Heart right ventricle (tissue), 16 donors: ENCODE measurements at regions of chr21 and their contacts with region 1.

Region 1: DNA sequence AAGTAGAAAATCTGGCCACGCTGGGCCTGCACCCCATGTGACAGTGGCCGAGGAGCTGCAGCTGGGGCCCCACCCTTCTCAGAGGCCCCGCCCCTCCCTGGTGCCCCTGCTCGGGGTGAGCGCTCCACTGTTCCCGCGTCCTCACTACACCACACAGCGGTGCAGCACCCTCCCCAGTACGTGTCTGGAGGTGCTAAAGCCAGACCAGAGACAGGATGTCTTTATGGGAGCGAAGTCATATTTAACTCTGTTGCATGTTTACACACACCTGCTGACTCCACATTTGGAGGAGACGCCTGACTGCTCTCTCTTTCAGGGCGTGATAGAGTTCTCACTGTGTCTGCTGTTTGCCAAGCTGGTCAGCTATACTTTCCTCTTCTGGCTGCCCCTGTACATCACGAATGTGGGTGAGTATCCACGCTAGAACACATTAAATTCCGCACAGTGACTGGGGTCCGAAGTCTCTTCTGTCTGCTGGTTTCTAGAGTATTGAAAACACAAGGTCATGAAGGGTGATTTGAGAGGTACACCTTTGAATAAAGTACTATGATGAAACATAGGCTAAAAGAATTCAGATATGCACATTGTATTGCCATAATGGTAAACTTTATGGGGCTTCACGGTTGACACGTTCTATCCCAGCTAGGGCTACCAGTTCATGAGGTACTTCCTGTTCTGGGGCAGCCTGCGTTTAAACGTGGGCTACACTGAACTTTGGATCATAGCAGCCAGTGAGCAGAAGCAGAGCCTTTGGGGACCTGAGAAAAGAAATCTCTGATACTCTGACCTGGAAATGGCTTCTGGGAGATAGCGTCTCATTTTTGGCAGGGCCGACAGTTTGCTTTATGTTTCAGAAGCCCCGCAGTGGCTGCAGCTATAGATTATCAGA is 48.4 kb downstream of the SLC37A1 start:
- DNase-seq: no peak
- ATAC-seq: no peak
- H3K4me3 ChIP-seq: no peak overlapping the region
- H3K27ac ChIP-seq: no peak overlapping the region
- H3K4me1 ChIP-seq: no peaks in the 10 kb centered on the region
- H3K27me3 ChIP-seq: no peaks in the 10 kb centered on the region
- CTCF ChIP-seq: no peak

Region 2: DNA sequence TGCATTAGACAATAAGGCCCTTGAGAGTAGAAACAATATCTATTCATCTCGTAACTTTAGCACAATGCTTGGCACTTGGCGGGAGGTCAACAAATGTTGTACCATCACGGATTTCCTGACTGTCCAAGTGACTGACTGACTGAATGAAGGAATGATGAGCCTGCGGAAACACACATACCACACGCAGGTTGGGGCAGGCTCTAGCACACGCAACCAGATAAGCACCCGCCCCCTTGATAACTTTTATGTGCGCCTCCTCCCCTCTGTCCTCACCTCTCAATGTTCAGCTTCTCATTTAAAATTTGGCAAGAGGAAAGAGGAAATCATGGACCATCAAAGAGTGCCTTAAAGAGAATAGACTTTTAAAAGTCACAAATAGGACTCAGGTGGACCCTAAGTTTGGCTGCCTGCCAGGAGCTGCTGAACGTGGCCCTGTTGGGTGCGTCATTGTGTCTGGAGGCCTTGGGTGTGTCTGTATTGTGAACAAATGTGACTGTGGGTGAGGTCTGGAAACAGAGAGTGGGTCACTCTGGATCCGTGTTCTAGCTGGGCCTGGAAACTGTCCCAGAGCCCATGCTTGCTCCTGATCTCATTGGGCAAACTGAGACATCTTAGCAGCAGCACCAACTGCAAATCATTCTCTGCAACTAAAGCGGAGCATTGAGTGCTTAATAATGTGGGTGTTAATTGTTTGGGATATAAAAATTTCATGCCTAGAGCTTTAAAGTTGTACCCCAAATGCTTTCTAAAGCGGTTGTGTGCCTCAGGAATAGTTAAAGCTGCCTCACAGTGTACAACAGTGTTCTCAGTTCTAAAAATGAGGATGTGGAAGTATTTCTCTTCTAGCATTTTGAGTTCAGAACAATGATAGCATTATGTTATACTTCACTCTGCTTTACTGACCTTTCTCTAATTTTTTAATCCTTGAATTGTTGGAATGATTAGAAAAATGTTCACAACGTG is 390.6 kb before region 1 on chr21:
- intact Hi-C with region 1: loop called in 1 of 10 experiments (anchors 10 kb)
- DNase-seq: peak; percentile 47 to 68
- ATAC-seq: peak; percentile 55 to 93 (median 84)
- H3K4me3 ChIP-seq: no peak overlapping the region
- H3K27ac ChIP-seq: peak overlapping the region in 7 of 10 donors; percentile 2 to 52 (median 30)
- H3K4me1 ChIP-seq: peaks cover 0 to 19% (median 0%) of the 10 kb centered on the region in 9 donors
- H3K27me3 ChIP-seq: no peaks in the 10 kb centered on the region
- CTCF ChIP-seq: no peak

Region 3: DNA sequence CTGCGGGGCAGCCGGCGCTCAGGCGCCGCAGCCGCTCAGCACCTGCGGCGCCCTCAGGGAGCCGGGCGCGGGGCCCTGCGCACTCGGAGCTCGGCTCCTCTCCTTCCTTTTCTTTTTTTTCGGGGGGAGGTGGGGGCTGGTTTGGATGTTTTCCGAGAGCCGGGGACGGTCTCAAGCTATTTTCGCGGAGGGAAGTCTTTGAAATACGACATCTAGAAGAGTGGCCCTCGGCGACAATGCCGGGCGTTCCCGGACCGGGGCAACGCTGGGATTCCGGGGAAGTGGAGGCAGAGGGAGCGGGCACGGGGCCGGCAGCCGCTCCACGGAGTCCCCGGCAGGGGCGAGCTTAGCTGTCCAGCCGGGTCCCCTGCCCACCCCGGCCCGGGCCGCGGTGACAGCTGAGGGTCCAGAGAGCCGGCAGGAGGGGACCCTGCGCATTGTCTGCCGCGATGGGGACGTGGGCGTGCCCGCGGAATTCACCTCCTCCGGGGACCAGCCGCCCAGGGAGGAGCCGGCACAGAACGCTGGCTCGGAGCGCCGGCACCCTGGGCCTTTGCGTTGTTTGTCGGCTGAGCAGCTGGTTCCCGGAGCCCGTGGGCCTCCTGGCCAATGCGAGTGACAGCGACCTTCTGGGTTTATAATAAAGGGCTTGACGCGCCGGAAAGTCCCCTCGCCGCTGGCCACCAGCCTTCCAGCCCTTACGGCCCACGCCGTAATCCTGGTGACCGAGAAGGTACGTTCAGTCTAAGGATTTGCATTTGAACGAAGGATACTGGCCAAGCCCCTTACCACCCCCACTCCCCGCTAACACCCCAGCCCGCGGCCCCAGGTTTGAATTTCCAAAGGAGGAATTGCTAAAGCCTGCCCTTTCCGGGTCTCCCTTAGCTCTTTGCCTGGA is 47.8 kb before region 1 on chr21:
- intact Hi-C with region 1: no loop called
- DNase-seq: peak; percentile 41 to 64
- ATAC-seq: peak; percentile 62 to 86 (median 76)
- H3K4me3 ChIP-seq: peak overlapping the region; percentile 68 to 99 (median 90)
- H3K27ac ChIP-seq: peak overlapping the region; percentile 29 to 86 (median 72)
- H3K4me1 ChIP-seq: peaks cover 0 to 24% (median 15%) of the 10 kb centered on the region in 9 donors
- H3K27me3 ChIP-seq: no peaks in the 10 kb centered on the region
- CTCF ChIP-seq: peak in 1 of 9 donors; percentile 4